IMR-90 (cell line): ENCODE measurements at regions of chr6 and their contacts with region 1.

Region 1: GRCh38 chr6:22420943-22421600 is 124.2 kb upstream of the PRL start:
- DNase-seq: no peak
- ATAC-seq: no peak
- H3K4me3 ChIP-seq: no peak overlapping the region
- H3K27ac ChIP-seq: no peak overlapping the region
- H3K4me1 ChIP-seq: no peaks in the 10 kb centered on the region
- H3K27me3 ChIP-seq: no peaks in the 10 kb centered on the region
- CTCF ChIP-seq: no peak
- POLR2A ChIP-seq: no peak
- RAD21 ChIP-seq: no peak

Region 2: GRCh38 chr6:22372922-22373321 is 48.1 kb before region 1 on chr6:
- CTCF ChIA-PET with region 1: no interaction called
- POLR2A ChIA-PET with region 1: no interaction called
- dilution Hi-C with region 1: no loop called
- in situ Hi-C with region 1: no loop called
- intact Hi-C with region 1: loop called (anchors 1 kb)
- DNase-seq: no peak
- ATAC-seq: no peak
- H3K4me3 ChIP-seq: no peak overlapping the region
- H3K27ac ChIP-seq: no peak overlapping the region
- H3K4me1 ChIP-seq: no peaks in the 10 kb centered on the region
- H3K27me3 ChIP-seq: no peaks in the 10 kb centered on the region
- CTCF ChIP-seq: no peak
- POLR2A ChIP-seq: no peak
- RAD21 ChIP-seq: no peak

Region 3: DNA sequence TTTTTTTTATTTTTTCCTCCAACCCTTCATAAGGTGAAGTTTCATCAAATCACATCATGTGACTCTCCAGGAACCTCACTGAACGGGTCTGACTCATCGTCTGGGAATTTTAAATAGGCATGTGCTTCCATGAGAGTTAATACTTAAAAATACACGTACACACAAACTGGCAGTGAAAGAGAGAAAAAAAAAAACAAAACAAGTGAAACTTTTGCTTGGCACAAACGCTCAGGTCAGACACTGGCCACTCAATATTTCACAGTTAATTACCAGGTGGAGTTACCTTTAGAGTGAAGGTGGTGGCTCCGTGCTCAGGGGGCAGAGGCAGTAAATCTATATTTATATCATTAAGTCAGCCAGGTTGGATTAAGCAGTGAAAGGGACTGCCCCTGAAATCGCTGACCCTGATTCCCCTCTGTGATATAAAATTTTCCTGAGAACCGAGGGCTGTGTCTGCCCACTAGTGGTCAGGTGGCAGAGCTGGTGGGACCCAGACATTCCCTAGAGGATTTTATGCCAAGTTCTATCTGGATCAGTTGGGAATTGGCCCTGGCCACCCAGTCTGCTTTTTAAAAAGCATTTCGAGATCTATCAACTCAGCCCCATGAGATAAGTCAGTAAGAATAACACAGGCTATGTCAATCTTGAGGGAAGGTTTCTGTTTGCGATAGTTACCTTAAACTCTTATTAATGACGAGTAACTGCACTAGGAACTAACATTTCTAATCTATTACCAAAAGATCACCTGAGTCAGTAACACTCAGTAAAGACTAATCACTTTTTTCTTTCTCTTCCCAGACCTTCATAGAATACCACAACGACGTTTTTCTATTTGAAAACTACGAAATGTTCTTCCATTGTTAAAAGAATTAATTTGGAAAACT is 407.3 kb after region 1 on chr6:
- CTCF ChIA-PET with region 1: no interaction called
- POLR2A ChIA-PET with region 1: no interaction called
- dilution Hi-C with region 1: no loop called
- in situ Hi-C with region 1: no loop called
- intact Hi-C with region 1: loop called (anchors 10 kb)
- DNase-seq: peak; percentile 97
- ATAC-seq: peak; percentile 84
- H3K4me3 ChIP-seq: no peak overlapping the region
- H3K27ac ChIP-seq: peak overlapping the region; percentile 17; the same call in 1 of the 2 replicates
- H3K4me1 ChIP-seq: peaks cover 4% of the 10 kb centered on the region
- H3K27me3 ChIP-seq: no peaks in the 10 kb centered on the region
- CTCF ChIP-seq: peak; percentile 64
- POLR2A ChIP-seq: no peak
- RAD21 ChIP-seq: peak; percentile 65